Activated CD4-positive, alpha-beta memory T cell treated with anti-CD3 and anti-CD28 coated beads, Interleukin-2, amount 10 ng/mL, durations not matched to agents 7 days and 5 days (primary cell): ENCODE measurements at regions of chr2 and their contacts with region 1.

Region 1: DNA sequence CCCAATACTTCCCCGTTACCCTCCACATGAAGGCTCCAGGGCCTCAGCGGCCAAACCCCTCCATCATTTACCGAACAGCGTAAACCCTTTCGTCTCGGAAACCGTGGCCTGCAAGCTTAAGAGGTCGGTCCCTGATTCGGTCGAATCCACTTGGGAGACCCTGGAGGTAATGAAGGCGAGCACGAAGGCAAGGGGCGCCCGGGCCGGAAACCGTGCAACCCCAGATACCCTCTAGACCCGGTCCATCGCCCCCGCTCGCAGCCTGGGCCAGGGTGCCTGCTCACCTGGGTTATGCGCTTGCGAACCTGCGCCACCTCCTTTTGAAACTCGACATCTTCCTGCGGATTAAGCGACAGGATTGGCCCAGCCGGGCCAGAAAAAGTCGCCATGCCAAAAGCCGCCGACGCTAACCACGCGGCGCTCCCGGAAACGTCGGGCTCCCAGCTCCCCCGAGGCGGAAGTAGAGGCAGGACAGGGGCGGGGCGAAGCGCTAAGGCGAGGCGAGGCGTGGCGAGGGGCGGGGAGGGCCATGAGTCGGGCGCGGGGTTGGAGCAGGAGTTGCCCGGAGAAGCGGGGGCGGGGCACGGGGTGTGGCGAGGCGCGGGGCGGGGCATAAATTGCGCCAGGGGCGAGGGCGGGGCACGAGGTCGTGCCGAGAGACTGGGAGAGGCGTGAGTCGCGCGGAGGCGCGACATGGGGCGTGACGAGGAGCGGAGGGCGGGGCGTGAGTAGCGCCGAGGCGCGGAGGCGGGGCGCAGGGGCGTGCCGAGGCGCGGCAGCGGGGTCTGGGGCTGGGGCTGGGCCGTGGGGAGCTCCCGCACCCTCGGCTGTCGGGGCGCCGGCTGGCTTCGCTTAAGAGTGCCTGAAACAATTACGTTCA is at the start of gene NIFK:
- DNase-seq: peak; percentile 100
- H3K4me3 Mint-ChIP-seq: peak within 1 kb of the TSS; percentile 89
- H3K27ac Mint-ChIP-seq: peak within 1 kb of the TSS; percentile 88
- H3K4me1 Mint-ChIP-seq: peaks cover 44% of the 10 kb centered on the region
- H3K27me3 Mint-ChIP-seq: peaks cover 2% of the 10 kb centered on the region
- total RNA-seq, gene NIFK: 63.4 to 67.2 TPM

Region 2: DNA sequence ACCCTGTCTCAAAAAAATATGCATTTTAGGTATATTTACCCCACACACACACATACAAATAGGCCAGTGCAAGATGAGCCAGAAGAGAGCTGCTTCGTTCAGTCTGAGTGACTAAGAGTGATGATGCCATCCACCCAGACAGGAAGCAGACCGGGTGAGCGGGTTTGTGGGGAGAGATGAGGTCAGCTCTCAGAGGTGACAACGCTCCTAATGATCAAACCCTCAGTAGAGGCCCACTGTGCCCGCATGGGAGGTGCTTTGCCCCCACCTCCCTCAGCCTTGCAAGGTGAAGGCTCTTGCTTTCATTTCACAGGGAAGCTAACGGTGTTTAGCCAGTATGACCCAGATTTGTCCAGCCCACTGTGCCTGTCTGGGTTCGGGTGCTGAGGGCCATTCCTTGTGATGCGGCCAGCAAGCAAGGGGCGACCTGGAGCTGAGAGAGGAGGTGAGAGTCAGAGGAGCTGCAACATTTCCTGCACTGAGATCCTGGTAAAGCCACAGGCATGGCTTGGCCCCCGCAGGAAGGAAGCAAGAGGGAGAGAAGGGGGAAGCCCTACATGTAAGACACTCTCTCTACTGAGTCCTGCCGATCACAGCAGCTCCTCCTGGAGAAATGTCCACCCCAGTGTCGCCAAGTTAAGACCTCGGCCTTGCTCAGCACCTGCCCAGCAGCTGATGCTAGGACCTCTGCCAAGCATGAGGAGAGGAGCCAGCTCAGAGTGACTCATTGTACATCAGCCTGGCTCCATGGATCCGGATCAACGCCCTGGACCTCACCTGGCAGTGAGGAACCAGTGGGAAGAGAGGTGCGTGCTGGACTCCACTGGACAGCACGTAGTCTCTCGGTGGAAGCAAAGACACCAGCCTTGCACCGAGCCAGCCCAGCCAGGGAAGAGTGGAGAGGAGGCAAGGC is 37.0 kb before region 1 on chr2:
- CTCF ChIA-PET with region 1: interaction called, 11 read pairs
- POLR2A ChIA-PET with region 1: interaction called, 30 read pairs
- DNase-seq: peak; percentile 95
- H3K4me3 Mint-ChIP-seq: peak overlapping the region; percentile 79
- H3K27ac Mint-ChIP-seq: peak overlapping the region; percentile 97
- H3K4me1 Mint-ChIP-seq: peaks cover 50% of the 10 kb centered on the region
- H3K27me3 Mint-ChIP-seq: no peaks in the 10 kb centered on the region

Region 3: GRCh38 chr2:121722479-121722878 is 14.2 kb before region 1 on chr2:
- CTCF ChIA-PET with region 1: no interaction called
- POLR2A ChIA-PET with region 1: interaction called, 13 read pairs
- DNase-seq: peak; percentile 52
- H3K4me3 Mint-ChIP-seq: peak overlapping the region; percentile 25
- H3K27ac Mint-ChIP-seq: peak overlapping the region; percentile 92
- H3K4me1 Mint-ChIP-seq: peaks cover 38% of the 10 kb centered on the region
- H3K27me3 Mint-ChIP-seq: no peaks in the 10 kb centered on the region

Region 4: DNA sequence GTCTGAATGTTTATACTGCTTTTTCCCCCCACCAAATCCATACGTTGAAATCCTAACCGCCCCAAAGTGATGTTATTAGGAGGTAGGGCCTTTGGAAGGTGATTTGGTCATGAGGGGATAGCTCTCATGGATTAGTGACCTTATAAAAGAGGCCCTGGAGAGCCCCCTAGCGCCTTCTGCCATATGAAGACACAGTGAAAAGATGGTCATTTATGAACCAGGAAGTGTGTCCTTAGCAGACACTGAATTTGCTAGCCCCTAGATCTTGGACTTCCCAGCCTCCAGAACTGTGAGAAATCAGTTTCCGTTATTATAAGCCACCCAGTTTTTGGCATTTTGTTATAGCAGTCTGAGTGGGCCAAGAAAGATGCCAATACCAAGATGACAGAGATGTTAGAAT is 11.5 kb after region 1 on chr2:
- CTCF ChIA-PET with region 1: interaction called, 3 read pairs
- POLR2A ChIA-PET with region 1: interaction called, 14 read pairs
- DNase-seq: no peak
- H3K4me3 Mint-ChIP-seq: no peak overlapping the region
- H3K27ac Mint-ChIP-seq: no peak overlapping the region
- H3K4me1 Mint-ChIP-seq: peaks cover 8% of the 10 kb centered on the region
- H3K27me3 Mint-ChIP-seq: peaks cover 5% of the 10 kb centered on the region

Region 5: DNA sequence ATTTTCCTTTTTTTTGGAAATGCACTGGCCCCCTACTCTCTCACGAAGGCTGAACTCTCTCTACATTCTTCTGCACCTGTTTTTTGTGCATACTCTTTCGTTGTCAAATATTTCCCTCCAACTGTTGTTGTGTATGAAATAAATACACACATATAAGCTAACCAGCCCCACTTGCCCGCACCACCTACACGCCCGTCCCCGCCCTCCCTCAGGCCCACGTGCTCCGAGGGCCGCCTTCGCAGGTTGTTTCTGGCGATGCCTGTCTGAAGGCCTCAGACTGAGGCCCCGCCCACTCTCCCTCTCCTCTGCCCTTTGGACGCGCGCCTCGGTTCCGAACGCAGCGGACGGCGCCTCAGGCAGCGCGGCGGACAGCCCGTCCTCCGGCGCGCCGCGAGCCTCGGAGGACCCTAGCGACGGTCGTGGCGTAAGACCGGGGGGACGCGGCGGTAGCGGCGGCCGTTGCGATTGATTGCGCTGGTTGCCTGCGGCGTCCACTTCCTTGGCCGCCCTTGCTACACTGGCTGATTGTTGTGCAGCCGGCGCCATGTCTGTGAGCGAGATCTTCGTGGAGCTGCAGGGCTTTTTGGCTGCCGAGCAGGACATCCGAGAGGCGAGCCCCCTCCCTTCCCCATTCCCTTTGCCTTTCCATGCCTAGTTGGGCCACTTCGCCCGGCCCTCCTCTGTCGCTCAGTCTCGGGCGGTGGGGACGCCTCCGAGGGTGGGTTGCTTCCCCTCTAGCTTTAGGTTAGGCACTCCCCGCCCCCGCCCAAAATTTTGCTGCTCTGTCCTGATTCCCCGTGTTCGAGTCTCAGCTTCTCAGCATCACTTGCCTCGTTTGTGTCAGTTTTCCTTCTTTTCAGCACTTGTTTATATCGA is 18.8 kb after region 1 on chr2 and contains the start of gene TSN:
- CTCF ChIA-PET with region 1: interaction called, 3 read pairs
- POLR2A ChIA-PET with region 1: interaction called, 28 read pairs
- DNase-seq: peak; percentile 98
- H3K4me3 Mint-ChIP-seq: peak within 1 kb of the TSS; percentile 86
- H3K27ac Mint-ChIP-seq: peak within 1 kb of the TSS; percentile 88
- H3K4me1 Mint-ChIP-seq: peaks cover 26% of the 10 kb centered on the region
- H3K27me3 Mint-ChIP-seq: no peaks in the 10 kb centered on the region
- total RNA-seq, gene TSN: 52.7 to 56.7 TPM

Region 6: DNA sequence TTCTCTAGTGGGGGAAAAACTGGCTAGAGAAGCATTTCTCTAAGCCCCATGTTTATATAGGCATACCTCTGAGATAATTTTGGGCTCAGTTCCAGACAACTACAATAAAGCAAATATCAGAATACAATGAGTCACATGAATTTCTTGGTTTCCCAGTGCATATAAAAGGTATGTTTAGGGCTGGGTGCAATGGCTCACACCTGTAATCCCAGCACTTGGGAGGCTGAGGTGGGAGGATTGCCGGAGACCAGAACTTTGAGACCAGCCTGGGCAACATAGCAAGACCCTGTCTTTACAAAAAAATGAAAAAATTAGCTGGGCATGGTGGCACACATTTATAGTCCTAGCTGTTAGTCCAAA is 41.0 kb after region 1 on chr2:
- CTCF ChIA-PET with region 1: no interaction called
- POLR2A ChIA-PET with region 1: no interaction called
- DNase-seq: no peak
- H3K4me3 Mint-ChIP-seq: no peak overlapping the region
- H3K27ac Mint-ChIP-seq: no peak overlapping the region
- H3K4me1 Mint-ChIP-seq: peaks cover 3% of the 10 kb centered on the region
- H3K27me3 Mint-ChIP-seq: peaks cover 4% of the 10 kb centered on the region

Region 7: DNA sequence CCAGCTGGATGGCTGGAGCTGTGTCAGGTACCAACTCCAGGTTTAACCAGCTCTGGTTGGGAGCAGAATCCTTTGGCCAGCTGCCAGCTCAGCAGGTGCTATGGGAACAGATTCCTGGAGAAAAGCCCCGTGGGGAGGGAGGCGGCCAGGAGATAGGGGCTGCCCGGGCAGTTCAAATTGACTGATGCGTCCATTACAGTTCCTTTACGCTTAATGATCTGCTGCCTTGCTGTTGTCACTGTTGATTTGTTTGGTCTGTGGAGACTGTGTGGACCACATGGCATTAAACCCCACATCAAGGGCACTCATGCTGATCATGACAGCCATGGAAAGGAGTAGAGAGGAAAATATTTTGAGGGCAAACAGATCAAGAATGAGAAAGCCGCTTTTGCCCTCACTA is 218.7 kb after region 1 on chr2:
- CTCF ChIA-PET with region 1: no interaction called
- POLR2A ChIA-PET with region 1: no interaction called
- DNase-seq: no peak
- H3K4me3 Mint-ChIP-seq: no peak overlapping the region
- H3K27ac Mint-ChIP-seq: no peak overlapping the region
- H3K4me1 Mint-ChIP-seq: no peaks in the 10 kb centered on the region
- H3K27me3 Mint-ChIP-seq: peaks cover 9% of the 10 kb centered on the region